Activated CD4-positive, alpha-beta T cell treated with anti-CD3 and anti-CD28 coated beads for 36 hours (primary cell): ENCODE measurements at regions of chr2 and their contacts with region 1.

Region 1: DNA sequence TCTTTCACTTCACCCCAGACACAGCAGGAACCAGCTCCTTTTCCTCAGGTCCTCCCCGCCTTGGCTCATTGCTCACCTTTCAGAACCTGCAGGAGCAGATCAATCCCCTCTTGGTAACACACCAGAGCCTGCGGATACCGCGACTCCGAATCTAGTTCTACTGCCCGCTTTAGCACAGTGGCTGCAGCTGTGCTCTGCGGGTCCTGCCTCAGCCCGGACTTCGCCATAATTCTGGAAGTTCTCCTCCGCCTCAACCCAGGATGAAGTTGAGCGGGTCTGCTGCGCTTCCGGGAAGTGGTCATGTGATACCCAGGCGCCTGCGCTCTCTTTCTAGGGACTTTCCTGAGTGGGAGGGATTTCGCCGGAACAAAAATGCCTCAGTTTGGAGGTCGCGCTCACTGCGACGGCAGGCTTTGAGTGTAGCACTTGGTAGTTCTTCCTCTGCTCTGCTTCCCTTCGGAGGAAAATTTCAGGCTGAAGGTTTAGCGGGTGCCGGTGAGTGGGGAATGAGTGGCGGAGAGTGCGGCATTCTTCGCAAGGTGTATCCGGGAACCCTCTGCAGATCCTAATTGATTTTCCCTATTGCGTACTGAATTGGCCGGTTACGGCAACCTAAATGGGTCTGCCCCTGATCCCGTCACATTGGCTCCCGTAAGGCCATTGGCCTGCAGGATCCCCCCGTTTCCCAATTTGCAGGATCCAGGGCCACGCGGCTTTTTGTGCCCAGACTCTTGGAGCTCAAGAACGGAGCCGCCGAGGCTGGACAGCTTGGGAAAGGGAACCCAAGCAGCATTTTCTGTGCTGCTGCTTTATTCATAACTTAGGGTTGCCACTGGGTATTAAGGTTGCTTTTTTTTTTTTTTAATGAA is at the starts of genes MITD1 and MRPL30:
- DNase-seq: peak; percentile 93
- ATAC-seq: peak; percentile 93
- H3K4me3 Mint-ChIP-seq: peak within 1 kb of the TSS; percentile 96
- H3K27ac Mint-ChIP-seq: peak within 1 kb of the TSS; percentile 99
- H3K4me1 Mint-ChIP-seq: peaks cover 57% of the 10 kb centered on the region
- H3K27me3 Mint-ChIP-seq: no peaks in the 10 kb centered on the region
- total RNA-seq, gene MITD1: 66.3 to 70.9 TPM
- total RNA-seq, gene MRPL30: 30.8 to 31.2 TPM

Region 2: GRCh38 chr2:98608116-98608999 is 572.6 kb before region 1 on chr2 and contains the starts of genes COA5 and UNC50:
- CTCF ChIA-PET with region 1: no interaction called
- POLR2A ChIA-PET with region 1: no interaction called
- intact Hi-C with region 1: loop called in 1 of 2 experiments (anchors 1 kb)
- DNase-seq: peak; percentile 95
- ATAC-seq: peak; percentile 91
- H3K4me3 Mint-ChIP-seq: peak within 1 kb of the TSS; percentile 83
- H3K27ac Mint-ChIP-seq: peak within 1 kb of the TSS; percentile 94
- H3K4me1 Mint-ChIP-seq: peaks cover 61% of the 10 kb centered on the region
- H3K27me3 Mint-ChIP-seq: no peaks in the 10 kb centered on the region
- total RNA-seq, gene COA5: 17.7 to 33.2 TPM
- total RNA-seq, gene UNC50: 21.1 to 31.4 TPM

Region 3: GRCh38 chr2:98835831-98836385 is 345.1 kb before region 1 on chr2:
- CTCF ChIA-PET with region 1: no interaction called
- POLR2A ChIA-PET with region 1: no interaction called
- intact Hi-C with region 1: loop called in 1 of 2 experiments (anchors 5 kb)
- DNase-seq: peak; percentile 57
- ATAC-seq: peak; percentile 78
- H3K4me3 Mint-ChIP-seq: no peak overlapping the region
- H3K27ac Mint-ChIP-seq: peak overlapping the region; percentile 79
- H3K4me1 Mint-ChIP-seq: peaks cover 29% of the 10 kb centered on the region
- H3K27me3 Mint-ChIP-seq: no peaks in the 10 kb centered on the region

Region 4: DNA sequence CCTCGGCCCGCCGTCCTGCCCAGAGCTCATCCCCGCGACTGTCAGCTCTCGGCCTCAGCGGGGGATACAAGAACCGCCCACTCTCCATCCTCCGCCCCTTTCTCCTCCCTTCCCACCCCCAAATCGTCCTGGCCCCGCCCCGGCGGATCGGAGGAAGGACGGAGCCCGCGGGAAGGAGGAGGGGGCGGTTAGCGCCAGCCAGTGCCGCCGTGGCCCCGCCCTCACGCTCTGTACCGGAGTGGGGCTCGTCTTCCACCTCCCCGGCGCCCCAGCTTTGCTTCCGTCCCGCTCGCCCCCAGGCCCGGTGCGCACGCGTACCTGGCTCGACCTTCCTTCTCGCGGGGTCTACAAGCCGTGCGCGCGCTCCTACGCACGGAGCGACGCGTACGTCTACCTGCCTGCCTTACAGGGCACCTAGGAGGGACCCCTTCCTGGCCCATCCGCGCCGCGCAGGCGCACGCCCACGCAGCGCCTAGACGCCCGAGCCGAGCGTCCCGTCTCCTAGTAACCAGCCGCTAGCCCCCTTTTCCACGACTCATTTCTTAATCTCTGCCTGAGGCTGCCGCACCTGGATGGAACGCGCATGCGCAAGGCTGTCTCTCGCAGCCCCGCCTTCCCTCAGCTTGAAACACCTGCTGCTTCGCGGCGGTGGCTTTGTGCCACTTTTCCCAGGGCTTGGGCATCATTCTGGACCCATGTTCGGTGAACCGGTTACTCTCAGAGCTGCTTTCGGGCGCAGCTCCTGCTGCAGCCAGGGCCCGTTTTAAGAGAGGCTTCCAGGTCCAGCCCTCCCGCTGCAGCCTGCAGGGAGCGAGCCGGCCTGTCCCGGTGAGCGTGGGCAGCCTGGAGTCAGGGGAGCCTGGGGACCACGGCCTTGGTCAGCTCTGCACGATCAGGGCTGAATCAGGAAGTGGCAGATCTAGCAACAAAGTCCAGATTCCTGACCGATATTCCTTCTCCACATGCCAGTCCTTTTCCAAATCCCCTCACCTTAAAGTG is 39.6 kb before region 1 on chr2 and contains the start of gene C2orf15:
- CTCF ChIA-PET with region 1: interaction called, 7 read pairs
- POLR2A ChIA-PET with region 1: interaction called, 5 read pairs
- intact Hi-C with region 1: loop called (anchors 1 kb)
- DNase-seq: peak; percentile 98
- ATAC-seq: peak; percentile 95
- H3K4me3 Mint-ChIP-seq: peak within 1 kb of the TSS; percentile 94
- H3K27ac Mint-ChIP-seq: peak within 1 kb of the TSS; percentile 86
- H3K4me1 Mint-ChIP-seq: peaks cover 16% of the 10 kb centered on the region
- H3K27me3 Mint-ChIP-seq: no peaks in the 10 kb centered on the region
- total RNA-seq, gene C2orf15: 0.87 to 1.1 TPM

Region 5: DNA sequence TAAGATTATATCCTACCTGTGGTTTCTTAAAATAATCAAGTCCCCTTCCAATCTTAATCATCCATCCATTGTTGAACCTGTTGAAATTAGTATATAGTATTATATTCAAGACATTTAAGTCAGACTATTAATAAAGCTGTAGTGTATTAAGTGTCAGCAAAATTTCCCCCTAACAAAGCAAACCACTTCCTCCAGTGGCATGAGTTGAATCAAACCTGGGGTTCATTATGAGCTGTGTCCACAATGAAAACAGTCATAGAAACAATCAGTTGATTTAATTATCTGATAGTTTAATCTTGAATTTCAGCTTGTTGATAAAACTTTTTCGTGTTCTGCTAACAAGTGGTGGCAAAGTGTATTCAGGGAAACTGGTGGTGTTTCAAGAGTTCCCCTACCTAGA is 11.5 kb before region 1 on chr2:
- CTCF ChIA-PET with region 1: interaction called, 19 read pairs
- POLR2A ChIA-PET with region 1: no interaction called
- intact Hi-C with region 1: no loop called
- DNase-seq: no peak
- ATAC-seq: no peak
- H3K4me3 Mint-ChIP-seq: no peak overlapping the region
- H3K27ac Mint-ChIP-seq: no peak overlapping the region
- H3K4me1 Mint-ChIP-seq: peaks cover 23% of the 10 kb centered on the region
- H3K27me3 Mint-ChIP-seq: no peaks in the 10 kb centered on the region

Region 6: GRCh38 chr2:99489761-99490622 is 309.0 kb after region 1 on chr2 and contains the start of gene REV1:
- CTCF ChIA-PET with region 1: no interaction called
- POLR2A ChIA-PET with region 1: no interaction called
- intact Hi-C with region 1: loop called (anchors 1 to 5 kb)
- DNase-seq: peak; percentile 97
- ATAC-seq: peak; percentile 89
- H3K4me3 Mint-ChIP-seq: peak within 1 kb of the TSS; percentile 89
- H3K27ac Mint-ChIP-seq: peak within 1 kb of the TSS; percentile 99
- H3K4me1 Mint-ChIP-seq: peaks cover 33% of the 10 kb centered on the region
- H3K27me3 Mint-ChIP-seq: no peaks in the 10 kb centered on the region
- total RNA-seq, gene REV1: 30.0 to 38.2 TPM

Region 7: DNA sequence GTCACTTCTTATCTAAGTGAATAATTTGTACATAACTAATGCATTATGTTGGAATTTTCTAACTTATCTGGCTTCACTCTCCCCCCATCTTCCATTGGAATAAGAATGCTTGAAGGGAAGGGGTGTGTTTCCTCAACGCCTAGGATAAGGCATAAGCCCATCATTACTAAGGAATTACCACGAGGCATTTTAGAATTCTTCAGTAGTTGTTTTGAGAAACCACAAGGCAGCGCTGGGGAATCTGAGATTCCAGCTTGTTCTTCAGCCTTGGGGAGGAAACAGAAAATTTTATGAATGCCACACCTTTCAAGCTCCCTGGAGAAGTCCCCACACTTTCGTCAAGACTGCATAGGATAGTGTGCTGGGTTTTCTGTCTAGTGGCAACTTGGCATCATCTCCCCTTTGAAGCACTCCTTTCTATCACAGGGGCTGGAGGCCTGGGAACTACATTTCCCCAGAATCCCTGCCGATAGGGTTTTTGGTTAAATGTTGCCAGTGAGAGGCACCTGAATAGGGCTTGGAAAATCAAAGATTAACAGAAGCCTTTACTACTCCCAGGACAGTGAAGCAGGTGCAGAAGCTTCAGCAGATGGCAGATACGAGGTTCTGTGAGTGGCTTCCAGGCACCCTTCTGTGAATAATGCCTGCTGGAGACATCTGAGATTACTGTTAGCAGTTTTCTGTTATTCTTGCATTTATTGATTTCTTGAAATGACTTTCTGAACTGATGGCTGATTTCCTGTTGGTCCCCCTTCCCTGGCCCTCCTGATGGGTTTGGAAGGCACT is 501.5 kb after region 1 on chr2:
- CTCF ChIA-PET with region 1: no interaction called
- POLR2A ChIA-PET with region 1: no interaction called
- intact Hi-C with region 1: no loop called
- DNase-seq: no peak
- ATAC-seq: no peak
- H3K4me3 Mint-ChIP-seq: no peak overlapping the region
- H3K27ac Mint-ChIP-seq: no peak overlapping the region
- H3K4me1 Mint-ChIP-seq: no peaks in the 10 kb centered on the region
- H3K27me3 Mint-ChIP-seq: no peaks in the 10 kb centered on the region